ENCODE measurements at regions of chr1 and their contacts with region 1.

Region 1: DNA sequence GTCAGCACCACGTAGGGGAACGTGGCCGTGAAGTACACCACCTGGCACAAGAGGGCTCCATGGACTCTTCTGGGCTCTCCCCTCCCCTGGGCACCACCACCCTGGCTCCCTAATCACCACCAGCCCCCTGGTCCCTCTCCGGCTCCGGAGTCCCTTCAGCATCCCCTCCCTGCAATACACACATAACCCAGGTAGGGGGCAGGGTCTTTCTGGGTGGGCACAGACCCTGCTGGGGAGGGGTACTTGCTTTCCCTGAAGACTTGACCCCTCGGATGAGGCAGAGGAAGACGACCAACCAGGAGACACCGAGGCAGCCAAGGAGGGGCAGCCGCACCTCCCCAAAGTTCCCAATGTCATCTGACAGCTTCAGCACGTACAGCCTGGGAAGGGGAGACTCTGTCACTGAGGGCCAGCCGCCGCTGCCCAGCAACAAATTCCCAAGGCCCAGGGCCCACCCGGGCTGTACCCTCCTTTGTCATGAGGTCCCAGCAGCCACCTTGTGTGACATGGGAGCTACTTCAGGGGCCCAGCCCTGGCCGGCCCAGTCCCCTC is 11.3 kb downstream of the CCDC24 start:
- DNase-seq: no peak
- ATAC-seq: no peak
- H3K4me3 ChIP-seq: no peak overlapping the region
- H3K27ac ChIP-seq: no peak overlapping the region
- H3K4me1 ChIP-seq: no peaks in the 10 kb centered on the region; the same call in 1 of the 2 replicates
- H3K27me3 ChIP-seq: no peaks in the 10 kb centered on the region
- CTCF ChIP-seq: no peak
- POLR2A ChIP-seq: no peak
- RAD21 ChIP-seq: no peak

Region 2: GRCh38 chr1:43466403-43466802 is 536.3 kb before region 1 on chr1:
- CTCF ChIA-PET with region 1: no interaction called
- POLR2A ChIA-PET with region 1: no interaction called
- dilution Hi-C with region 1: no loop called
- in situ Hi-C with region 1: no loop called
- intact Hi-C with region 1: no loop called
- DNase-seq: no peak
- ATAC-seq: no peak
- H3K4me3 ChIP-seq: no peak overlapping the region
- H3K27ac ChIP-seq: no peak overlapping the region
- H3K4me1 ChIP-seq: peaks cover 4% of the 10 kb centered on the region; the same call in 1 of the 2 replicates
- H3K27me3 ChIP-seq: no peaks in the 10 kb centered on the region
- CTCF ChIP-seq: no peak
- POLR2A ChIP-seq: no peak
- RAD21 ChIP-seq: no peak

Region 3: DNA sequence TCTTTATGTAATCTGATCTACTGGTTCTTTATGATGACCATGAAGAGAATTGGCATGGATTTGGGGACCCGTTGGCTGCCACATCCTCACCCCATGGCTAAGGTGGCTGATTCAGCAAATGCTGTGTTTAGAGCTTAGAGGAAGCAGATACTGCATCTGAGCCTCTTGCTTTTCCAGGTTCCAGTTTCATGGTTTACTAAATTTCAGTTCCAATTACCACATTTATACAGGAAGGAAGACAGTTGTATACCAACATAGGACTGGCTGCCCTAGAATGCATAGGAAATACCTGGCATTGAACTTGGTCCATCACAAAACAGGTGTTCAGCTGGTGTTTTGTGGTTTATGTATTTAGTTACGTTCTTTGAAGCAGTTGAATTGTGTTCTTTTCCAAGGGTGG is 188.3 kb before region 1 on chr1:
- CTCF ChIA-PET with region 1: no interaction called
- POLR2A ChIA-PET with region 1: no interaction called
- dilution Hi-C with region 1: no loop called
- in situ Hi-C with region 1: no loop called
- intact Hi-C with region 1: no loop called
- DNase-seq: no peak
- ATAC-seq: no peak
- H3K4me3 ChIP-seq: no peak overlapping the region
- H3K27ac ChIP-seq: no peak overlapping the region
- H3K4me1 ChIP-seq: no peaks in the 10 kb centered on the region
- H3K27me3 ChIP-seq: no peaks in the 10 kb centered on the region
- CTCF ChIP-seq: no peak
- POLR2A ChIP-seq: no peak
- RAD21 ChIP-seq: no peak

Region 4: DNA sequence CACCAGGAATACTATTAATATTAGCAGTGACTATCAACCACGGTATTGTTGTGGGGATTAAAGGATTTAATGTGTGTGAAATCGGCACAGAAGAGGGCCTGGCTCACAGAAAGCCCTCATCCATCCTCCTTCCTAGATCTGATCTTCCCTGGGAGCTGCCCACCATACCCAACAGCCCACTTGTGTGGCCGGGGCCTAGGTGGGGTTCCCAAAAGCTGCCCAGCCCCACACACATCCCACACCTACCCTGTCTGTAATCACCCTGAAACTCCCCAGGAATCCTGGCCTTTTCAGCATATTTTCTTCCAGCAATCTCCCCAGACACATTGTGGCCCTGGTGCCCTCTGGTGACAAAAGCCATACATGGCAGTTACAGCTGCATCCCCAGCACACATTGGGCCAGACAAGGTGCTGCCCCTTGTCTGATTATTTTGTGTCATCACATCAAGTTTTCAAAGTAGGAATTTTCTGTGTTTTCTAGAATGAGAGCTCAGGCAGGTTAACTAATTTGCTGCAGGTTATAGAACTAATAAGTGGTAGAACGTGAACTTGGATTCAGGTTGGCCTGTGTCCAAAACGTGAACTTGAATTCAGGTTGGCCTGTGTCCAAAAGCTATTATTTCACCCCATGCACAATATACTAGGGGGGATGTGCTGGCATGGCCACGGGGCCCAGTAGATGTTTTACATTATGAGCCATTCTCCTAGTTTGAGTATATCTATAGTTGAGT is 33.9 kb after region 1 on chr1:
- CTCF ChIA-PET with region 1: interaction called, 16 read pairs
- POLR2A ChIA-PET with region 1: no interaction called
- dilution Hi-C with region 1: no loop called
- in situ Hi-C with region 1: no loop called
- intact Hi-C with region 1: loop called (anchors 1 kb)
- DNase-seq: peak; percentile 61
- ATAC-seq: peak; percentile 80
- H3K4me3 ChIP-seq: no peak overlapping the region
- H3K27ac ChIP-seq: no peak overlapping the region
- H3K4me1 ChIP-seq: peaks cover 7% of the 10 kb centered on the region; the same call in 1 of the 2 replicates
- H3K27me3 ChIP-seq: no peaks in the 10 kb centered on the region
- CTCF ChIP-seq: peak; percentile 73
- POLR2A ChIP-seq: no peak
- RAD21 ChIP-seq: peak; percentile 81

Region 5: DNA sequence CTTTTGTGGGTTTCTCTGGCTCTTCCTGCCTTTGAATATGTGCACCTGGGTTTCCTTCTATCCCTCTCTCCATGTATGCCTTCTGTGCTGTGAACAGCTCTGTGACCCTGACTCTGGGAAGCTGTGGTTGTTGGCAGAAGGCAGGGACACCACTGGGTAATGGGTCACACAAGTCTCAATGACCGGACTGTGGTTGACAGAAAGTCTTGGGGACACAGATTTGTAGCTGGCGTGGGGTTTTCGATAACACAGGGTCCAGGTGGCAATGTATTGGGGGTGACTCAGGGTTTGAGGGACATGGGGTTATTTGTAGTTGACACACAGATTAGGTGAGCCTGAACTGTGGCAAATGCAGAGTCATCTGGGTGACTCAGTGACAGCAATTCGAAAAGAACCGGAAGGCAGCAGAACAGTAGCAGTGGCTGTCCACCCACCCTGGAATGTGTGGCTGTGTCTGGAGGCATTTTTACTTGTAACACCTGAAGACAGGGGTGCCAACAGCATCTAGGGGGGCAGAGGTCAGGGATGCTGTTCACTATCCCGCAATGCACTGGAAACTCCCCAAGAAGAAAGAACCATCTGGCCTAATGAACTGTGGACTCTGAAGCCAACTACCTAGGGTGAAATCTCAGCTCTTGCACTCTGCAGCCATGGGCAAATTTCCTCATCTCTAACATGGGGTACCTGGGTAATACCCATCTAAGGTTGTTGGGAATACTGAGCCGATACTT is 41.6 kb after region 1 on chr1:
- CTCF ChIA-PET with region 1: interaction called, 20 read pairs
- POLR2A ChIA-PET with region 1: no interaction called
- dilution Hi-C with region 1: no loop called
- in situ Hi-C with region 1: loop called (anchors 5 kb)
- intact Hi-C with region 1: loop called (anchors 1 kb)
- DNase-seq: no peak
- ATAC-seq: no peak
- H3K4me3 ChIP-seq: no peak overlapping the region
- H3K27ac ChIP-seq: no peak overlapping the region
- H3K4me1 ChIP-seq: peaks cover 13% of the 10 kb centered on the region
- H3K27me3 ChIP-seq: no peaks in the 10 kb centered on the region
- CTCF ChIP-seq: no peak
- POLR2A ChIP-seq: no peak
- RAD21 ChIP-seq: no peak

Region 6: DNA sequence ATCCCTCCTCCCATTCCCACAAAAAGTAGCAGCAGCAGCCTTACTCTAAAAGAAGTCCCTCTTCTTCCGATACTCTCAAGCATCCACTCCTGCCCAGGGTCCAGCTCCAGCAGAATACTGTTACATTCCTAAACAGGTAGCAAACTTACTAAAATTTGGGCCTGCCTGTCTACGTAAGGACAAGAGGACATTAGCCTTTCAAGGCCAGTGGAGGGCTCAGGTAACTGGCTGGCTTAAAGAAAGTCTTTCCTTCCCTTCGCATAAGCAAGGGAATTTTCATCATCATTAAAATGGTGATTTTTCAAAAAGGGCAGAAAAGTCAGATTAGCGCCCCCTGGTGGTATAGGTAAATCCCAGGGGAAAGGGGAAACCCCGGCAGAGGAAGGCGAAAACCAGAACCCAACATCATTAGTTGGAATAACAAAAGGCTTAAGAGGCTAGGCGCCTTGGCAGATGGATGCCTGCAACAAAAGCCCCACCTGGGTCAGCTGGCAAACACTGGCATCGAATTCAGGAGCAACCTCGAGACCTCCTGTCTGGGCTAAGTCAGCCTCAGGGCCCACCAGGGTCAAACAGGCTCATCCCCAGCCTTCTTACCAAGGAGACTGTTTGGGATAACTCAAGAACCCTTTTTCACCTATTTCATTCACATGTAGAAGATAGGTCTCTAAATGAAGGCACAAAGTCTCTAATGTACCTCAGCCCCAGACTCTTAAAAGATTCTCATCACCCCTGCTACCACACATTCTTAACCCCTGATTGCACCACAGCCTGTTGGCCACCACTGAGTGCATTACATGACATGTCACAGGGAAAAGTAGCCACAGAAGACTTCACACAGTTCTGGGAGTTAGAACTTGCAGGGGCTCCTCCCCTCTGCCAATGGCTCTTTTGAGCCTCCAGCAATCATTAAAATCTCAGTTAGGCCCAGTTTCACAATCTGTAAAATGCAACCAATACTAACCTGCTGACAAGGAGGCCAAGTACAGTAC is 315.7 kb after region 1 on chr1:
- CTCF ChIA-PET with region 1: no interaction called
- POLR2A ChIA-PET with region 1: no interaction called
- dilution Hi-C with region 1: no loop called
- in situ Hi-C with region 1: no loop called
- intact Hi-C with region 1: loop called (anchors 10 kb)
- DNase-seq: peak; percentile 23
- ATAC-seq: peak; percentile 68
- H3K4me3 ChIP-seq: no peak overlapping the region
- H3K27ac ChIP-seq: no peak overlapping the region
- H3K4me1 ChIP-seq: no peaks in the 10 kb centered on the region
- H3K27me3 ChIP-seq: no peaks in the 10 kb centered on the region
- CTCF ChIP-seq: peak; percentile 74
- POLR2A ChIP-seq: no peak
- RAD21 ChIP-seq: peak; percentile 56

Region 7: DNA sequence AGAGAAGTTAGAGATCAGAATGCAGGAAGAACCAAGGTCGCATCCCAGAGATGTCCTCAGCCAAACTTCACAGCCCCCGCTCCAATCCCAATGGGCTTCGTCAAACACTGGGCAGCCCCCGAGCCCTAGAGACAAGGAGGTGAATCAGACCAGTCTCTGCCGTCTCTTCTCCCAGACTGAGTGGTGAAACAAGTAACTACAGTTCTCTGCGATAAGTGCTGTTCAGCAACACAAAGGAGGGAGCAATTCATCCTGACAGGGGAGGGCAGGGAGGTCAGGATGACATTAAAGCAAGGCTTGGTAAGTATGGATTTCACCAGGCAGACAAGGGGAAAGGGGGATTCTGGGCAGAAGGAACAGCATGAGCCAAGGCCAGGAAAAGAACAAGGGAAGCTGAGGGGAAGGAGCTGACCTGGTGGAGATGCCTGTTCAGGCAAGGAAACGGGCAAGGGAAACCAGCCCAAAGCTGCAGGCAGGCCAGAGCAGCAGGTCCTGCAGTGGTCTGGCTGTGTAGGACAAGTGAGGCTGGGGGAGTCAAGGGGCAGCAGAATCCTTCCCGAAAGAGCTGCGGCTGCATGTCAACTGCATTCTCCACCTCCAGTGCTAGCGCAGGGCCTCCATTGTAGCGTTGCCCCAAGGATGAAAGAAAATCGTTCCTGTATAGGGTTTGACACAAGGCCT is 365.9 kb after region 1 on chr1:
- CTCF ChIA-PET with region 1: no interaction called
- POLR2A ChIA-PET with region 1: no interaction called
- dilution Hi-C with region 1: no loop called
- in situ Hi-C with region 1: no loop called
- intact Hi-C with region 1: no loop called
- DNase-seq: no peak
- ATAC-seq: no peak
- H3K4me3 ChIP-seq: no peak overlapping the region
- H3K27ac ChIP-seq: no peak overlapping the region
- H3K4me1 ChIP-seq: no peaks in the 10 kb centered on the region
- H3K27me3 ChIP-seq: peaks cover 54% of the 10 kb centered on the region
- CTCF ChIP-seq: no peak
- POLR2A ChIP-seq: no peak
- RAD21 ChIP-seq: no peak

Measured in IMR-90 (cell line).